ENCODE measurements at regions of chr11 and their contacts with region 1.

Region 1: DNA sequence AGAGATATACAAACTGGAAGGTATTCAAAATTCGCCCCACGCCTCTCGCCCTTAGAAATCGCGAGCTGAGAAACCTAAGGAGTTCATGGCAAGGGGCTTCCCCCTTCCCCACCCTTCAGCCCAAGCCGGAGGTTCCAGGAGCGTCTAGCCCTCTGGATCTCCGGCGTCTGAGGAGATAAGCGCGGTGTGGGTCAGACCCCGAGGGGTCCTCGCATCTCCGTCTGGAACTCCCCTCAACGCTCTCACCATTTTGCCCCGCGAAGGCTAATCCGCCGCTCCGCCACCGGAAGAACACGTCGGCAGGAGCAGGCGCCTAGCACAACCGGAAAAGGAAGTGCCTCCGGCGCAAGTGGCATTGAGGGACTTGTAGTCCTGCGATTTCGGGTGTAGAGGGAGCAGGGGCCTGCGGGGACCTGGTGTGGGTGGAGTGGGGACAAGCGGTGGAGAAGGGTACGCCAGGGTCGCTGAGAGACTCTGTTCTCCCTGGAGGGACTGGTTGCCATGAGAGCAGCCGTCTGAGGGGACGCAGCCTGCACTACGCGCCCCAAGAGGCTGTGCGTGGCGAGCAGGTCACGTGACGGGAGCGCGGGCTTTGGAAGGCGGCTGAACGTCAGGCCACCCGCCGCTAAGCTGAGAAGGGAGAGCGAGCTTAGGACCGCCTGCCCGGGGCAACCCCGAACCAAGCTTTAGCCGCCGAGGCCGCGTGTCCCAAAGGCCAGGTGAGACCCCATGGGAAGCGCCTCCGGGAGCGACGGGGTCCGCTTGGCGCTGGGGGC is at the starts of genes FEN1 and TMEM258:
- DNase-seq: peak; percentile 98
- H3K4me3 ChIP-seq: peak within 1 kb of the TSS; percentile 64 to 87 (median 82)
- H3K27ac ChIP-seq: peak within 1 kb of the TSS; percentile 92 to 96 (median 94)
- H3K4me1 ChIP-seq: peaks cover 23 to 46% (median 31%) of the 10 kb centered on the region in 4 donors
- H3K27me3 ChIP-seq: no peaks in the 10 kb centered on the region
- CTCF ChIP-seq: peak in 1 of 3 experiments; percentile 11
- EP300 ChIP-seq: no peak
- POLR2A ChIP-seq: peak; percentile 36
- total RNA-seq, gene FEN1: 5.0 to 10.2 (median 7.5) TPM
- total RNA-seq, gene TMEM258: 34.5 to 48.2 (median 43.8) TPM

Region 2: DNA sequence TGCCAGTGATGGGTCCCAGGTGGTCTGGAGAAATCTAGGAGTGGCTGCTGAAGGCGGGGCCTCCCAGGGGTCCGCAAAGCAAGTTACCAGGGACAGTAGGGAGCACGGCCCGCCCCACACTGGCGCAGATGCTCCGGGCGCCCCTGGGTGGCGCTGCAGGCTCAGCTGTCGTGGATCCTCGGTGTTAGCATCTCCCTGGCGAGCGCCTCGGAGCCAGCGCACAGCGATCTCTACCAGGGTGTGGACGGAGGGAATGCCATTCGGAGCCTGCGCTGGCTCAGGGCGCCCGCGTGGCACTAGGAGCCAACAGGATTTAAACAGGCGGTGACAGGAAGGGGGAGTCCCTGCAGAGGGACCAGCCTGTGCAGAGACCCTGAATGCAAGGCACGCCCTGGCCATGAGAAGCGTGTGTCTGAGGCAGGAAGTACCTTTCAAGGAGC is 78.7 kb after region 1 on chr11:
- intact Hi-C with region 1: loop called (anchors 5 kb)
- DNase-seq: peak; percentile 95
- H3K4me3 ChIP-seq: peak overlapping the region in 2 of 4 donors; percentile 25 to 27
- H3K27ac ChIP-seq: peak overlapping the region in 3 of 4 donors; percentile 2 to 52 (median 35)
- H3K4me1 ChIP-seq: peaks cover 10 to 29% (median 17%) of the 10 kb centered on the region in 4 donors
- H3K27me3 ChIP-seq: no peaks in the 10 kb centered on the region
- CTCF ChIP-seq: peak; percentile 87 to 96 (median 93)
- EP300 ChIP-seq: no peak
- POLR2A ChIP-seq: no peak

Region 3: GRCh38 chr11:61947486-61948210 is 155.2 kb after region 1 on chr11:
- intact Hi-C with region 1: no loop called
- DNase-seq: peak; percentile 98
- H3K4me3 ChIP-seq: no peak overlapping the region
- H3K27ac ChIP-seq: peak overlapping the region in 1 of 4 donors; percentile 38
- H3K4me1 ChIP-seq: peaks cover 13 to 34% (median 31%) of the 10 kb centered on the region in 4 donors
- H3K27me3 ChIP-seq: peaks cover 0 to 9% (median 0%) of the 10 kb centered on the region in 4 donors
- CTCF ChIP-seq: peak; percentile 90 to 98 (median 95)
- EP300 ChIP-seq: no peak
- POLR2A ChIP-seq: no peak

Region 4: DNA sequence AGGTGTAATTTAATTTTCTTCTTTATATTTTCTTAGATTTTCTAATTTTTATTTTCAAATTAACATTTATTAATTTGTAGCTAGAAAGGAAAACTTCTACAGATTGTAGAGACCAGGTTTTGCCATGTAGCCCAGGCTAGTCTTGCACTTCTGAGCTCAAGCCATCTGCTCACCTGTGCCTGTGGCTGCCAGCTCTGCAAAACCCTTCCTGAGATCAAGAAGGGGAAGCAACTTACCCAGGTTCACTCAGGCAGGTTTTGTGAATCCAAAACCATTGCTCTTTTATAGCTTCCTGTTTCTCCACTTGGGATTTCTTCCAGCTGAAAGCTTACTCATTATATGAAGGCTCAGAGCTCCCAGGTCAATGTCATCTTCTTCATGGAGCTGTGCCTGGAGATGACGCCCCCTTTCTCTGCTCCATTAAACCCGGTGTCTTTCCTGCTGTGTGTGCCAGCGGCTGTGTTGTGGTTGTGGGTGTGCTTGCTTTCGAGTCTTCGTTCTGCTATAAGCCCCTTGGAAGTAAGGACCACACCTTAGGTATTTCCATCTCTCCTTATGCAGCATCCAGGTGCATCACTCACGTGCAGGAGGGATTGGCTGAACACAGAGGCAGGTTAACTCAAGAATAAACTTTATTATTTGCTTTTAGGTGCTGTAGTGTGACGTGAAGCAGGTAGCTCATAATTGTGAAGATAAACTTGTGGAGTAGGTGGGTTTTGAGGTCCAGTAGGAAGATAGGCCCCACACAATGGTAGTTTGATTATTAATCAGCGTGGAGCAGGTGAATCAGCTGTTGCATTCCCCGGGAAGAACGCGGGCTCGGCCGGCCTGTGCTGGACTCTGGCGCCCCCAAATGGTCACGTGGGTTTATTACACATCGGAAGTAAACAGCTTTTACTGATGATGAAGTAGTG is 289.1 kb after region 1 on chr11:
- intact Hi-C with region 1: loop called (anchors 10 kb)
- DNase-seq: peak; percentile 95
- H3K4me3 ChIP-seq: peak overlapping the region in 1 of 4 donors; percentile 5
- H3K27ac ChIP-seq: no peak overlapping the region
- H3K4me1 ChIP-seq: peaks cover 0 to 9% (median 6%) of the 10 kb centered on the region in 4 donors
- H3K27me3 ChIP-seq: no peaks in the 10 kb centered on the region
- CTCF ChIP-seq: peak; percentile 91 to 94 (median 91)
- EP300 ChIP-seq: no peak
- POLR2A ChIP-seq: no peak

Region 5: GRCh38 chr11:62108017-62108750 is 315.7 kb after region 1 on chr11:
- intact Hi-C with region 1: loop called (anchors 5 kb)
- DNase-seq: no peak
- H3K4me3 ChIP-seq: no peak overlapping the region
- H3K27ac ChIP-seq: no peak overlapping the region
- H3K4me1 ChIP-seq: peaks cover 21 to 46% (median 33%) of the 10 kb centered on the region in 4 donors
- H3K27me3 ChIP-seq: no peaks in the 10 kb centered on the region
- CTCF ChIP-seq: peak; percentile 75 to 84 (median 84)
- EP300 ChIP-seq: no peak
- POLR2A ChIP-seq: no peak